ENCODE measurements at regions of chr16 and their contacts with region 1.

Region 1: GRCh38 chr16:72832621-72833248 is 215.2 kb downstream of the ZFHX3 start:
- DNase-seq: peak; percentile 84
- H3K4me3 ChIP-seq: no peak overlapping the region
- H3K27ac ChIP-seq: peak overlapping the region; percentile 9 to 60 (median 48)
- H3K4me1 ChIP-seq: peaks cover 8 to 22% (median 14%) of the 10 kb centered on the region in 4 donors
- H3K27me3 ChIP-seq: no peaks in the 10 kb centered on the region
- CTCF ChIP-seq: peak; percentile 91 to 98 (median 97)
- EP300 ChIP-seq: no peak
- POLR2A ChIP-seq: no peak

Region 2: GRCh38 chr16:72743011-72743761 is 89.5 kb before region 1 on chr16:
- in situ Hi-C with region 1: no loop called
- intact Hi-C with region 1: no loop called
- DNase-seq: no peak
- H3K4me3 ChIP-seq: no peak overlapping the region
- H3K27ac ChIP-seq: no peak overlapping the region
- H3K4me1 ChIP-seq: no peaks in the 10 kb centered on the region
- H3K27me3 ChIP-seq: no peaks in the 10 kb centered on the region
- CTCF ChIP-seq: no peak
- EP300 ChIP-seq: no peak
- POLR2A ChIP-seq: no peak

Region 3: GRCh38 chr16:72927199-72928089 is 94.7 kb after region 1 on chr16:
- in situ Hi-C with region 1: no loop called
- intact Hi-C with region 1: loop called (anchors 5 kb)
- DNase-seq: peak; percentile 20
- H3K4me3 ChIP-seq: no peak overlapping the region
- H3K27ac ChIP-seq: no peak overlapping the region
- H3K4me1 ChIP-seq: peaks cover 0 to 16% (median 10%) of the 10 kb centered on the region in 4 donors
- H3K27me3 ChIP-seq: no peaks in the 10 kb centered on the region
- CTCF ChIP-seq: no peak
- EP300 ChIP-seq: no peak
- POLR2A ChIP-seq: no peak

Region 4: DNA sequence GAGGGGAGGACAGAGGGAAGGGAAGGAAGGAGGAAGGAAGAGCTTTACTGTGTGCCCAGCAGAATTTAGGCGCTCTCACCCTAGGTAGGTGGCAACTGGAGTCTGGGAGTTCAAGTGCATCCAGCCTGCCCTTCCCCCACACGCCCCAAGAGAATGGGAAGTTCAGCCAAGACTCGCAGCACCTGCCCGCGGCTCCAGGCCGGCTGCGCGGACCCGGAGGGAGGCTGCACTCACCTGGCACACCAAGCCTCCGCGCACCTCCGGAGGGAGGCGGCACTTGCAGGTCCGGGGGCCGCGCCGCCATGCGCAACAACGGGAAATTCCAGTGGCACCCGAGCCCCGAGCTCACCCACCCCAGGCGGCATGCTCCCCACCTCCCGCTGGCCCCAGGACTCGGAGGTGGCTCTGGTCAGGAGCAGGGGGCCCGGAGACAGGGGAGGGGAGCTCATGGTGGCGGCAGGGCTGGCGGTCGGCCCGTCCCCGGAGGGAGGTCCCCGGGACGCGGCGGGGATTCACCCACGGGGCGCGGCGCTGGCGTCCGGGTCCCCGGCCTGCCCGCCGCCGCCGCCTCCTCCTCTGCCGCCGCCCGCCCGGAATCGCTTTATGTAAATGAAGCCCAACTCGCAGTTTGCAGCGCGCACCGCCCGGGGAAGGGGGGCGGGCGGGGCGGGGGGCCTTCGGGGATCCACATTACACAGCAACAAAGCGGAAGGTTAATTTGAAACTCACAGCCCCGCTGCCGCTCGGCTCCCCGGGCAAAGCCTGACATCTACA is 215.0 kb after region 1 on chr16 and contains the start of gene ZFHX3:
- in situ Hi-C with region 1: loop called in 3 of 4 experiments (anchors 25 kb)
- intact Hi-C with region 1: loop called (anchors 5 kb)
- DNase-seq: peak; percentile 79
- H3K4me3 ChIP-seq: peak within 1 kb of the TSS; percentile 55 to 95 (median 72)
- H3K27ac ChIP-seq: peak within 1 kb of the TSS; percentile 92 to 96 (median 96)
- H3K4me1 ChIP-seq: peaks cover 33 to 83% (median 66%) of the 10 kb centered on the region in 4 donors
- H3K27me3 ChIP-seq: no peaks in the 10 kb centered on the region
- CTCF ChIP-seq: peak in 1 of 5 experiments; percentile 10
- EP300 ChIP-seq: no peak
- POLR2A ChIP-seq: peak; percentile 44
- total RNA-seq, gene ZFHX3: 12.3 to 23.7 (median 15.3) TPM

Region 5: GRCh38 chr16:73058221-73058615 is 225.5 kb after region 1 on chr16:
- in situ Hi-C with region 1: loop called in 2 of 4 experiments (anchors 25 kb)
- intact Hi-C with region 1: no loop called
- DNase-seq: peak; percentile 58
- H3K4me3 ChIP-seq: peak overlapping the region; percentile 64 to 96 (median 94)
- H3K27ac ChIP-seq: peak overlapping the region; percentile 92 to 96 (median 96)
- H3K4me1 ChIP-seq: peaks cover 15 to 61% (median 45%) of the 10 kb centered on the region in 4 donors
- H3K27me3 ChIP-seq: peaks cover 19% of the 10 kb centered on the region
- CTCF ChIP-seq: peak in 1 of 5 experiments; percentile 8
- EP300 ChIP-seq: no peak
- POLR2A ChIP-seq: no peak

Region 6: DNA sequence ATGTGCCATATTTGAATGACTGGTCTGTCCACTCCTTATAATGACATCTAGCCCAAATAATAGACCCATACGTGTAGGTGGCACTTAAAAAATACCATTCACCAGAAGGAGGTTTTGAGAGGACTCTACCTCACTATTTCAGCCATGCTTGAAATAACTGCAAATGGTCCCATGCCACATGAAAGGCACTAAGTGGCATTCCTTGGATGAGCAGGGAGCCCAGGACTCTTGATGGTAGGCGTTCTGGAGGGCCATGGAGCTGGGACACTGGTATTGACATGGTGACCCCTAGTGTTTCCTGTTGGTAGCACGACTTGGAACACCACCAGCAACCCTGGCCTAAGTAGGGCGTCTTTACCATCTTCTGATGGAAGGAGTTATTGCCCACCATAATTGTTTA is 363.9 kb after region 1 on chr16:
- in situ Hi-C with region 1: loop called (anchors 25 kb)
- intact Hi-C with region 1: loop called (anchors 10 kb)
- DNase-seq: peak; percentile 75
- H3K4me3 ChIP-seq: no peak overlapping the region
- H3K27ac ChIP-seq: no peak overlapping the region
- H3K4me1 ChIP-seq: peaks cover 0 to 1% (median 0%) of the 10 kb centered on the region in 4 donors
- H3K27me3 ChIP-seq: no peaks in the 10 kb centered on the region
- CTCF ChIP-seq: peak; percentile 57 to 65 (median 62)
- EP300 ChIP-seq: no peak
- POLR2A ChIP-seq: no peak

Measured in transverse colon (tissue), 4 donors.